HCT116 (cell line): ENCODE measurements at regions of chr22 and their contacts with region 1.

Region 1: GRCh38 chr22:26461188-26461810 is 22.3 kb downstream of the HPS4 start:
- DNase-seq: peak; percentile 18
- ATAC-seq: peak; percentile 99
- H3K4me3 ChIP-seq: no peak overlapping the region
- H3K27ac ChIP-seq: no peak overlapping the region
- H3K4me1 ChIP-seq: peaks cover 0 to 7% of the 10 kb centered on the region in 2 experiments; a peak in 3 of 4 replicates
- H3K27me3 ChIP-seq: no peaks in the 10 kb centered on the region
- CTCF ChIP-seq: peak; percentile 45 to 88 (median 87); a peak in 5 of 6 replicates
- POLR2A ChIP-seq: no peak
- RAD21 ChIP-seq: peak; percentile 61

Region 2: GRCh38 chr22:26364066-26365015 is 97.0 kb before region 1 on chr22:
- CTCF ChIA-PET with region 1: interaction called, 35 read pairs
- POLR2A ChIA-PET with region 1: interaction called, 3 read pairs
- RAD21 ChIA-PET with region 1: interaction called in 1 of 2 experiments, 3 read pairs
- intact Hi-C with region 1: loop called (anchors 1 kb)
- DNase-seq: peak; percentile 79
- ATAC-seq: peak; percentile 89
- H3K4me3 ChIP-seq: no peak overlapping the region
- H3K27ac ChIP-seq: no peak overlapping the region
- H3K4me1 ChIP-seq: peaks cover 4 to 13% of the 10 kb centered on the region in 2 experiments; a peak in 3 of 4 replicates
- H3K27me3 ChIP-seq: 0 out of 2 replicates have a peak, but pooled peaks cover 3% of the 10 kb centered on the region
- CTCF ChIP-seq: peak; percentile 44 to 79 (median 73); a peak in 5 of 6 replicates
- POLR2A ChIP-seq: no peak
- RAD21 ChIP-seq: peak; percentile 68

Region 3: DNA sequence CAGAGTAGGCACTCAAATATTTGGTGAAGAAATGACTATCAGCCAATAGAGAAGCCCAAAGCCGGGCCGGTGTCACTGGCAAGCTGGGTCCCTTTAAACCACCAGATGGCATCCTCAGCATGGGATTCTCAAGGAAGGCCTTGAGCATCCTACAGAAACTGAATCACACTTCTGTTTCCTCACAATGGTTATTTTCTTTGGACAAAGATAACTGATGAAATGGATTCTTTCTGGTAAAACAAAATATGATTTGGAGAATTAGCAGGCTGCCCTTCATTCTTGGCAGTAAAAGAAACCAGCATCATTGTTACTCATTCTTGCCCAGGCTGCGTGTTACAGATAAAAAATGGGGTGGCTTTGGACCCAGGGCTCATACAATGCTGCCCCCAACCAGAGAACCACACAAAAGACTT is 62.6 kb before region 1 on chr22:
- CTCF ChIA-PET with region 1: interaction called, 15 read pairs
- POLR2A ChIA-PET with region 1: no interaction called
- RAD21 ChIA-PET with region 1: no interaction called
- intact Hi-C with region 1: loop called (anchors 1 kb)
- DNase-seq: peak; percentile 41
- ATAC-seq: peak; percentile 94
- H3K4me3 ChIP-seq: no peak overlapping the region
- H3K27ac ChIP-seq: no peak overlapping the region
- H3K4me1 ChIP-seq: no peaks in the 10 kb centered on the region
- H3K27me3 ChIP-seq: peaks cover 9% of the 10 kb centered on the region; the same call in 1 of the 2 replicates
- CTCF ChIP-seq: peak; percentile 56 to 69 (median 64)
- POLR2A ChIP-seq: no peak
- RAD21 ChIP-seq: peak; percentile 75

Region 4: DNA sequence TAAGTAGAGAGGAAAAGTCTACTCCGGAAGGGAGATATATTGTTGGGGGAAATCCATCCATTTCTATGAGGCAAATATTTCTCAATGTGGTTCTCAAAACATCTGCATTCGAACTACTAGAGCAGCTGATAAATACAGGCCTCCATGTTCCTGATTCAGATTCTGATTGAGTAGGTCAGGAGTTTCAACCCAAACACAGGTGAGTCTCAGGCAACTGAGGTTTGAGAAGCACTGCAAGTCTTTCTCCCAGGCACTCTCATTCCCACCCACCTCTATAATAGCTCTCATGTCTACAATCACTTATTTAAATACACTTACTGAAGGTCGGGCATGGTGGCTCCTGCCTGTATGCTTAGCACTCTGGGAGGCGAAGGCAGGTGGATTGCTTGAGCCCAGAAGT is 47.0 kb before region 1 on chr22:
- CTCF ChIA-PET with region 1: no interaction called
- POLR2A ChIA-PET with region 1: no interaction called
- RAD21 ChIA-PET with region 1: no interaction called
- intact Hi-C with region 1: no loop called
- DNase-seq: no peak
- ATAC-seq: no peak
- H3K4me3 ChIP-seq: no peak overlapping the region
- H3K27ac ChIP-seq: no peak overlapping the region
- H3K4me1 ChIP-seq: peaks cover 11 to 14% of the 10 kb centered on the region in 2 experiments
- H3K27me3 ChIP-seq: peaks cover 70% of the 10 kb centered on the region
- CTCF ChIP-seq: no peak
- POLR2A ChIP-seq: no peak
- RAD21 ChIP-seq: no peak